ENCODE measurements at regions of chr22 and their contacts with region 1.

Region 1: DNA sequence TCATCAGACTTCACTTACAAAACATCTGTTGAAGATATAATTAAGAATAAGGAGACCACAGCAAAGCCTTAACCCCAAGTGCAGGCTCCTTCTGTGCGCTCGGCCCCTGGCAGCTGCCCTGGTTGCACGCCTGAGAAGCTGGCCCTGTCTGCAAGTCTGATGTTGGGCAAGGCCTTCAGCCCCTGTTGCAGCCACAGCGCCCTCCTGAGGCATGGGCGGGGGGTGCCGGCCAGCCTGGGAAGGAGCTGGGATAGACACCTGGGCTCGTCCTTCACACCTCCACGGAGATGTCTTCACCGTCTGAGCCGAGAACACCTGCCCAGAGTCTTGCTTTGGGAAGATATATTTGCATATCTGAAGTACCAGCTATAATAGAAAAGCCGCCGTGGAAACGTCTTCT is 104.1 kb downstream of the MPPED1 start:
- DNase-seq: peak; percentile 82
- ATAC-seq: peak; percentile 87
- H3K4me3 Mint-ChIP-seq: no peak overlapping the region
- H3K27ac Mint-ChIP-seq: no peak overlapping the region
- H3K4me1 Mint-ChIP-seq: no peaks in the 10 kb centered on the region
- H3K27me3 Mint-ChIP-seq: 0 out of 2 replicates have a peak, but pooled peaks cover 3% of the 10 kb centered on the region
- CTCF ChIP-seq: peak; percentile 51

Region 2: DNA sequence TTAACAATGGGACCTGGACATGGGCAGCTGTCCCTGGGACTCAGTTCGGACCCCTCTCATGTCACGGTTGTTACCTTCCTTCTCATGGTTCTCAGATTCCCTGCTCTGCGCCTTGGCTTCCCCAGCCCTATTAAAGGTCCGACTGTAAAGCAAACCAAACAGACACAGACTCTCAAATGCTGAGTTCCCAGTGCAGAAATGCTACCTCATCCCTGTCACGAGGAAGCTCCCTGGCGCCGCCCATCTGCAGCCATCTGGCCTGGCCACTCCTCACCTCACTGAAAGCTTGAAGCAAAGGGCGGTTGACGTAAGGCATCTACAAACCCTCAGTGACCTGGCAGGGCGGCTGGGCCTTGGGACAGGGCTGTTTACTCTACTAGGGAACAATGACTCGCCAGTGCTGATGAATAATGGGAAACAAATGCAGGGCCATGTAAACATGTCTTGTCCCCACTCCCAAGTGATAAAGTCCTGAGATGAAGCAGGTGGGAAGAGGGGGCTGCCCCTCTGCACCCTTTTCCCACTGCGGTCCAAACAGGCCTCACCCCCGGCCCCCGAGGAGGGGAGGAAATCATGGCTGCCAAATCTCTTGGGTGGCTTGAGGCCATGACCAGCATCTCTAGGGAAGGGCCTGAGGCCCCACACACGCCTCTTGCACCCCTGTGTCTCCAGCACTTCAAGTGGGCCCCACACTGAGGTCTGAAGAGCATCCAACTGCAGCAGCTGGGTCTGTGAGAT is 222.1 kb before region 1 on chr22:
- CTCF ChIA-PET with region 1: no interaction called
- POLR2A ChIA-PET with region 1: no interaction called
- DNase-seq: no peak
- ATAC-seq: no peak; the same call in 1 of the 2 replicates
- H3K4me3 Mint-ChIP-seq: no peak overlapping the region
- H3K27ac Mint-ChIP-seq: no peak overlapping the region
- H3K4me1 Mint-ChIP-seq: 0 out of 2 replicates have a peak, but pooled peaks cover 2% of the 10 kb centered on the region
- H3K27me3 Mint-ChIP-seq: no peaks in the 10 kb centered on the region
- CTCF ChIP-seq: no peak

Region 3: GRCh38 chr22:43427296-43428004 is 88.5 kb before region 1 on chr22:
- CTCF ChIA-PET with region 1: interaction called, 12 read pairs
- POLR2A ChIA-PET with region 1: no interaction called
- DNase-seq: no peak
- ATAC-seq: no peak
- H3K4me3 Mint-ChIP-seq: no peak overlapping the region
- H3K27ac Mint-ChIP-seq: no peak overlapping the region
- H3K4me1 Mint-ChIP-seq: no peaks in the 10 kb centered on the region
- H3K27me3 Mint-ChIP-seq: peaks cover 3% of the 10 kb centered on the region; the same call in 1 of the 2 replicates
- CTCF ChIP-seq: no peak

Region 4: DNA sequence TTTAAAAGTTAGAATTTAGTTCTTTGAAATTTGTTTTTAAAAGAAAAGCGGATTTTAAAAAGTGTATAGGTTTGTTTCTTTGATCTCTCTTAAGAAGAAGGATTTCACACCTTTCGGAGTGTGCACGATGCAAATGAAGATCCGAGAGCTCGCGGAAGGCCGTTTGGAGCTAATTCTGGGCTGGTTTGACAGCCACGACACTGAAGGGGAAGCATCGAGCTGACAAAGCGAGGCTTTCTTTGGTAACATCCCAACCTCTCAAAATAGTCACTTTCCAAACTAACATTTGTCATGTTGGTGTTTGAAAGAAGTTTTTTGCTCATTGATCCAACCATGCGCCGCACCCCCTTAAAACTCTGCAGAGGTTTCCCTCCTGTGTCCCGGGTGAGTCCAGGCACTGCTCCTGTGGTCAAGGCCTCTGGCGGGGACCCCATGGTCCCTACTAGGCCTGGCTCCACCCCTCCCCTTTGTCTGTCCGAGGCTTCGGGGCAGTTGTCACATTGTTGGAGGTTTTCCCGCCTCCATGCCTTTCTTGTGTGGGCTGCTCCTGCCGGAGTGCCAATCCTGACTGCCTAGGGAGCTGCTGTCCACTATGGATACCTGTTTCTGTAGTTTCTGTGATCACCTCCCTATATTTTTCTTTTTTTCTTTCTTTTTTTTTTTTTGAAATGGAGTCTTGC is 64.4 kb before region 1 on chr22:
- CTCF ChIA-PET with region 1: interaction called, 13 read pairs
- POLR2A ChIA-PET with region 1: no interaction called
- DNase-seq: no peak
- ATAC-seq: no peak
- H3K4me3 Mint-ChIP-seq: no peak overlapping the region
- H3K27ac Mint-ChIP-seq: no peak overlapping the region
- H3K4me1 Mint-ChIP-seq: peaks cover 9% of the 10 kb centered on the region
- H3K27me3 Mint-ChIP-seq: no peaks in the 10 kb centered on the region
- CTCF ChIP-seq: no peak

Region 5: DNA sequence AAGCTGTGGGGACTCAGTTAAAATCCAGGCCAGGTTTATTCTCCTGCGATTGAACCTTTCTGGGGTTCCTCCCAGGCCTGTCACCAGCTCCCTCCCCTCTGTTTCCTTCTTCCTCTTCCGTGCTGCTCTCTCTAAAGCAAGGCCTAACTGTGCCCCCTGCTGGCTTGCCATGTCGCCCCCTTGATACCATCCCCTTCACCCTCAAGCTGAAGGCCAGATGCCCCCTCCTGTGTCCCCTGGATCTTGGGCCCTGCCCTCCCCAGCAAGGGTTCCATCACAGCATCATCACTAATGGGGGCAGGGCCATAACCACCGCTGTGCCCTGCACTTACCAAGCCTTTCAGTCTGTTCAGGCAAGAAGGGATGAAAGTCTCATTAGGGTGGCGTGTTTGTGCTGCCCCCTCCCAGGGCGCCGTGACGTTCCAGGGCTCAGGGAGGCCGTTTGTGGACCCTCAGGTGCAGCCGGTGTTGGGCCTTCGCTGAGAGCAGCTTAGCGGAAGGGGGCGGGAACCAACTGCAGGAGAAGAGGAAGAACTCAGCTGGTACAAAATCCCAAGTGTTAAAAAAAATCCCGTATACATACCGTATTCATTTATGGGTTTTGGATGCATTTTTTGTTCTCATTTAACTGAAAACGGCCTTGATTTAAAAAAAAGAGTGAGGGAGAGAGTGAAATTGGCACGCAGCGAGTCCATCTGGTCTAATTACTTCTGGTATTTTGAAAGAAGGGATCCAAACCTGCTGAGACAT is 34.2 kb before region 1 on chr22:
- CTCF ChIA-PET with region 1: interaction called, 11 read pairs
- POLR2A ChIA-PET with region 1: no interaction called
- DNase-seq: no peak
- ATAC-seq: peak; percentile 29
- H3K4me3 Mint-ChIP-seq: peak overlapping the region; percentile 37
- H3K27ac Mint-ChIP-seq: no peak overlapping the region
- H3K4me1 Mint-ChIP-seq: peaks cover 13% of the 10 kb centered on the region
- H3K27me3 Mint-ChIP-seq: no peaks in the 10 kb centered on the region; the same call in 1 of the 2 replicates
- CTCF ChIP-seq: no peak

Region 6: DNA sequence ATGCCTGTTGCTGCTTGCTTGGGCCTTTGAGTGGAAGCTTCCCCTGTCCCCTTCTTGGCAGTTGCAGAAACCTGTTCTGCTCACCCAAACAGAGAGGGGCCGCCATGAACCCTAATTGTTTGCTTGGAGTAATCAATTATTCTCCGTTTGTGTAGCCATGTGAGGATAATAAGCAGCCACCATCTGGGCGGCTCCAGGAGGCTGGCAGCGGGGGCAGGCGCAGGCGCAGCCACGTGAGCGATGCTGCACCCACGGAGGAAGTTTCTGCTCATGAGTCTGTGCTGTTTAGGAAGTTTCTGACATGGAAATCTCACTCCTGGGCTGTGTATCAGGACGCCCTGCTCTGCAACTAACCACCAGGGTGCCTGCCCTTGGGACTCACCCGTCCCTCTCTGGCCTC is 14.0 kb before region 1 on chr22:
- CTCF ChIA-PET with region 1: interaction called, 10 read pairs
- POLR2A ChIA-PET with region 1: no interaction called
- DNase-seq: no peak
- ATAC-seq: no peak
- H3K4me3 Mint-ChIP-seq: no peak overlapping the region
- H3K27ac Mint-ChIP-seq: no peak overlapping the region
- H3K4me1 Mint-ChIP-seq: no peaks in the 10 kb centered on the region
- H3K27me3 Mint-ChIP-seq: no peaks in the 10 kb centered on the region
- CTCF ChIP-seq: no peak

Region 7: DNA sequence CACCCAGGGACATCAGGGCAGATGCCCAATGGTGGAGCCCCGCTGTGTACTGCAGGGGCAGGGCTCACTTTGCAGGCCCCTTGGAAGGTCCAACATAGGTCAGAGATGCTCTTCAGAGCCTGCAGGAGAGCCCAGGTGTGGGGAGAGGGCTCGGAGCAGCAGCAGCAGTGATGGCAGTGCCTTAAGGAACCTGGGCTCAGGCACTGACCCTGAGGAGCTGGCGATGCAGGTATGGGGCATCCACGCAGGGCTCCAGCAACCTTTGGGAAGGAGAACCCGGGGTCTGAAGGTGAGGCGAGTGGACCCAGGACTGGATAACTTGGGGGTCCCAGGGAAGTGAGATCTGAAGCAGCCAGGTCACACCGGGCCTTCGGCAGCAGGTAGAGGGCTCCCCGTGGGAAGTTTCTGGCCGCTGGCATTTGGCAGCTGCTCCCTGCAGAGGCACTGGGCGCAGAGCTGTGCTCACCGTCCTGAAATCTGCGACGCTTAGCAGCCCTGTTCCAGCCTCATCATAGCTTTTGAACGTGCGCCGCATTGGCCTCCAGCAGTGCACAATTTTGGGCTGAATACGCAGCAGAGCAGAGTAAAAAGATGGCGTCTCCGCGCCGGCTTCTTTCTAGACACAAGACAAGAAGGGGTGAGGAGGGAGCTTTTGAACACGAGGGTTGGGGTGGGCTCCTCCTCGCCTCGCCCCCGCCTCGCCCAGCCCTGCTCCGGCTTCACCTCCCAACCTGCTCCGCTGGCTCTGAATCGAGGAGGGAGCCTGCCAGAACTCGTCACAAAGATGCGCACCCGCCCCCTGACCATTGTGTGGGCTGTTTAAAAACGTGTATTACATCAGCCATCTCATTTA is 14.7 kb after region 1 on chr22:
- CTCF ChIA-PET with region 1: interaction called, 14 read pairs
- POLR2A ChIA-PET with region 1: no interaction called
- DNase-seq: no peak
- ATAC-seq: no peak
- H3K4me3 Mint-ChIP-seq: no peak overlapping the region
- H3K27ac Mint-ChIP-seq: no peak overlapping the region
- H3K4me1 Mint-ChIP-seq: peaks cover 7% of the 10 kb centered on the region; the same call in 1 of the 2 replicates
- H3K27me3 Mint-ChIP-seq: no peaks in the 10 kb centered on the region
- CTCF ChIP-seq: no peak